AG04449 (cell line): ENCODE measurements at regions of chr20 and their contacts with region 1.

Region 1: GRCh38 chr20:57351042-57351783 is at the start of gene RAE1:
- DNase-seq: peak; percentile 63
- H3K4me3 ChIP-seq: peak within 1 kb of the TSS; percentile 100
- CTCF ChIP-seq: no peak

Region 2: DNA sequence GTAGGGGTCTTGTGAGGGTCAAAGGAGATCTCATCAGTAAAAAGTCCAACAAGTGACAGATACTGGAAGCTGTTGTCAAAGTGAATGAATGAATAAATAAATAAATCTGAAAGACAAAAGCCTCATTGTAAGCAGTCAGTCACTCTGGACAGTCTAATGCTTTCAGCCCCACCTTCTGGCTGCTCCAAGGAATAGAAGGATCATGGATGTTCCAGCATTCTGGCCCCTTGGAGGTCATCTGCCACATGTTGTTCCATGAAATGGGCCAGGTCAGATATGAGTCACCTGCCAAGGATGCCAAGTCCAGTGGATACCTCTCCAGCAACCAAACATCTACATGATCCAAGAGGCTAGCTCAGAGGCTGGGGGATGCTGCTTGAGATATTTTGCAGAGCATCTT is 270.4 kb before region 1 on chr20:
- CTCF ChIA-PET with region 1: interaction called, 49 read pairs
- POLR2A ChIA-PET with region 1: no interaction called
- DNase-seq: no peak
- H3K4me3 ChIP-seq: no peak overlapping the region
- CTCF ChIP-seq: peak; percentile 26

Region 3: GRCh38 chr20:57089691-57090150 is 261.5 kb before region 1 on chr20:
- CTCF ChIA-PET with region 1: interaction called, 173 read pairs
- POLR2A ChIA-PET with region 1: no interaction called
- DNase-seq: no peak
- H3K4me3 ChIP-seq: no peak overlapping the region
- CTCF ChIP-seq: peak; percentile 92

Region 4: DNA sequence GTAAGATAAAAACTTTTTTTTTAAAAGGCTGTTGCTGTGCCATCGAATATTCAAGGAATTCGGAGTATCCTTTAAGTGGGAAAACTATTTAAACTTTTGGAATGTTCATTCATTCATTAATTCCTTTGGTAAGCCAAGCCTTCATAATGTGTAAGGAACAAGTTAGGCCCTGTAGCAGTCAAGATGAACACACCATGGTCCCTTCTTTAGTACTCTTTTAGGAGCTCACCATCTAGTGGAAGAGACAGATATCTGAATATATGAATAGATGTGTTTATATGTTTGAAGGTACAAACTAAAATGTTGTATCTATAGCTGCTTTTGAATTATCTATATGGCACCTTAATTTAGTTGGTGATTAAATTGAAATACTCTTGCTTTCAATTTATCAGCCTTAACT is 15.8 kb before region 1 on chr20:
- CTCF ChIA-PET with region 1: interaction called, 33 read pairs
- POLR2A ChIA-PET with region 1: no interaction called
- DNase-seq: no peak
- H3K4me3 ChIP-seq: no peak overlapping the region
- CTCF ChIP-seq: no peak

Region 5: GRCh38 chr20:57374931-57375651 is 23.9 kb after region 1 on chr20:
- CTCF ChIA-PET with region 1: no interaction called
- POLR2A ChIA-PET with region 1: no interaction called
- DNase-seq: no peak
- H3K4me3 ChIP-seq: no peak overlapping the region
- CTCF ChIP-seq: no peak

Region 6: DNA sequence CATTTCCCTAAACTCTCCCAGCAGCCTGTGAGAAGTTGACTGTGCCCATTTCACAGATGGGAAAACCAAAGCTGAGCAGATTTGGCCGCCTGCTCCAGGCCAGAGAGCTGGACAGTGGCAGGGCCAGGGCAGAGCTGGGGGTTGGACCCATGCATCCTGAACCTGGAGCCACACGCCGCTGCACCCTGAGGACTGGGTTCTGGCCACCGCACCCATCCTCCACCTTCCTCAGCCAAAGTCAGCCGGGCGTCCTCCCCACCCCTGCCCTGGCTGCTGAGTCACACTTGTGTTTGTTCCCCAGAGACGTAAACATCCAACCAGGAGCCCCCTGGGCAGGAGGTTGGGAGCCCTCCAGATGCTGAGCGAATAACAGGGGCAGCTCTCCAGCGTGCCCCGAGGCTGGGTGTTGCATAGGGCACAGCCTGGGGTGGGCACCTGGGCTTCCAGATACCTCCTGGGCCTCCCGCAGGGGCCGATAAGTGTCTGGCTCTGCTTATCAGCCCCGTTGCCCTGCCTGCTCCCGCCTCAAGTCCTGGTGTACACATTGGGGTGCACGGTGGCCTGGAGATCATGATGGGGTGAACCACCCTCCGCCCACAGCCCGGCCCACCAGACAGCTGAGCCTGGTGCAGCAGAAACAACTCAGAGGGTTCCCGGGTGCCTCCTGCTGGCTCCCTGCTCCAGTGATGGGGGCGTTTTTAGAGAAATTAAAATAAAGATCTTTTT is 63.8 kb after region 1 on chr20:
- CTCF ChIA-PET with region 1: no interaction called
- POLR2A ChIA-PET with region 1: no interaction called
- DNase-seq: no peak
- H3K4me3 ChIP-seq: no peak overlapping the region
- CTCF ChIP-seq: no peak

Region 7: DNA sequence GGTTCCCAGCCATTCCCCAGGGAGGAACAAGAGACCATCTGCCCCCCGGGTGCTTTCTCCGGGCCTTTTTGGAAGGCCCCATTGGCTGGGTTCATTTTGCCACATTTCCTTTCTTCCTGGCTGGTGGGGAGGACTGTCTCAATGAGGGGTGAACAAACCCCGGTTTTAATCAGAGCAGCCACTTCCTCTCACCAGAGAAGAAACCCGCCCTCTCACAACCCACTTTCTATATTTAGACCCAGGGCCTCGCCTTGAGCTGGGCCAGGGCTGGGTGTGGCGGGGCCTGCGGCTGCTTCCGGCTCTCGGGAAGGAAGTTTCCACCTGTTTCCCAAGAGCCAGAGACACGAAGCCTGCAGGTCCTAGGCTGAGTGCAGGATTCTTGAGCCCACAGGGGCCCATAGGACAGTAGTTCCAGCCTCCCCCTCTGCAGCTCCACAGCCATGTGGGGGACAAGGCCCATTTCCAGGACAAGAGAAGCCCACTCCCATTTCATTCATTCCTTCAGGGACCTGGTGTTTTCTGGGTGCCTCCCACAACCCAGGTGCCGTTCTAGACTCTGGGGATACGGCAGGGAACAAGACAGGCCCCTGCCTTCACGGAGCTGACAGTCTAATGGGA is 81.8 kb after region 1 on chr20:
- CTCF ChIA-PET with region 1: no interaction called
- POLR2A ChIA-PET with region 1: no interaction called
- DNase-seq: no peak
- H3K4me3 ChIP-seq: no peak overlapping the region
- CTCF ChIP-seq: no peak